ENCODE measurements at regions of chr2 and their contacts with region 1.

Region 1: DNA sequence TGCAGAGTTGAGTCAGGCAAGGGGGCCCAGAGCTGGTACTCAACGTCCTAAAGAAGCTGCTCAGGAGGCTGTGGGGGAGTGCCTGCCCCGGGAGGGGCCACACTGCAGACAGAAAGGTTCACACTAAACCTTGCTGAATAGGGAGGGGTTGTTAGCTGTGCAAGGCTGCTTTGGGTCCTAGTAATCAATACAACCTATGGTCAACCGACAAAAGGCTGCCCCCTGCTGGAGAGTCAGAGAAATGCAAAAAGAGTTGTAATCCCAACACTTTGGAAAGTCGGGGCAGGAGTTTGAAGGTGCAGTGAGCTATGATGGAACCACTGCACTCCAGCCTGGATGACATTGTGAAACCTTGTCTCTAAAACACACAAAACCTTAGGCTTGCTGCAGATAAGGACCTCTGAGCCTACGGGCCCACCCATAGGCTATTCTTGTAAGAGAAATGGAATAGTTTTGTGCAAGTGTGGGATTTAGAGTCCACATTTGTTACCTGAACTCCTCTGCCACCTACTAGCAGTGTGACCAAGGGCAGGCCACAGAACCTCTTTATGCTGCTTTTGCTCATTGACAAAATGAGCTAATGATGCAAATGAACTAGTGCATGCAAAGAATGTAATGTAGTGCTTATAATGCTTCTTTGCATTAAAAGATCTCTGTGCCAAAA is 81.5 kb downstream of the PRPF40A start:
- DNase-seq: peak; percentile 82
- ATAC-seq: peak; percentile 61

Region 2: DNA sequence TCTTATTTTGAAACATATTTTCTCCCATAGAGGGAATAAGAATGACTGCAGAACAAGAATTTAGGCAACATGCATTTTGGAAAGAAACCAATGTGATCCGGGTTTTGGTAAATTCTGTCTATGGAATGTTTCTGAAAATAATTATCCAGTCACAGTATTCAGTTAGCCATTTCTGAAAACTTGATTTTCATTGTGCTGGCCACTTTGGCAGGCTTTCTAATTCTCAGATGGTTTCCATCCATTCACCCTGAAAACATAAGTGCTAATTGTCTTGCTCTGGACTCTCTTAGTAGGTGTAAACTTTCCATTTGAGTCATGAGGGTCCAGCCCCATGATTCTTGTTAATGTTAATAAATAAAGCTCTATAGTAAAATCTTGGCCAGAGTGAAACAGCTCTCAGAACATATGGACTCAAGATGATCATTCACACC is 1550.6 kb before region 1 on chr2:
- intact Hi-C with region 1: no loop called
- DNase-seq: no peak
- ATAC-seq: no peak

Region 3: DNA sequence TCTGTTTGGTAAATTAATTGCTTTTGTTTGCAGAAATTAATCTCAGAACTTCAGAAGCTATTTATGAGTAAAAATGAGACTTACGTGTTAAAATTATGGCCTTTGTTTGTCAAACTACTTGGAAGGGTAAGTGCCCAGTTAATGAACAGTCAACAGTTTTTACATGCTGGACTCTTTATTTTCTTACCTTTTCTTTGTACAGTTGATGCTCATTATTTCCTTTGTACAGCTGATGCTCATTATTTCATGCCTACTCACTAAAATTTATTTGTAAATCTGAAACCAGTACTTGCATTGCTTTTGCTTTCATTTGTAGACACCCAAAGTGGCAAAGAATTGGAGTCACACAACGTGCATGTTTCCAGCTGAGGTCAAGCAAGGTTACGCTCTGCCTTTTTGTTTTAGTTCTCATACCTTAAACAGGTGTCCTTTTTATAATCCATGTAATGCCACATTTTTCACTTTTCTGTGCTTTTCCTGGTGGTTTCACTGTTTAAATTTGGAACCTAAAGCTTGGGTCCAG is 1212.8 kb before region 1 on chr2:
- intact Hi-C with region 1: no loop called
- DNase-seq: no peak
- ATAC-seq: no peak

Region 4: GRCh38 chr2:152189622-152190495 is 445.9 kb before region 1 on chr2:
- intact Hi-C with region 1: loop called (anchors 5 kb)
- DNase-seq: no peak
- ATAC-seq: peak; percentile 94

Region 5: DNA sequence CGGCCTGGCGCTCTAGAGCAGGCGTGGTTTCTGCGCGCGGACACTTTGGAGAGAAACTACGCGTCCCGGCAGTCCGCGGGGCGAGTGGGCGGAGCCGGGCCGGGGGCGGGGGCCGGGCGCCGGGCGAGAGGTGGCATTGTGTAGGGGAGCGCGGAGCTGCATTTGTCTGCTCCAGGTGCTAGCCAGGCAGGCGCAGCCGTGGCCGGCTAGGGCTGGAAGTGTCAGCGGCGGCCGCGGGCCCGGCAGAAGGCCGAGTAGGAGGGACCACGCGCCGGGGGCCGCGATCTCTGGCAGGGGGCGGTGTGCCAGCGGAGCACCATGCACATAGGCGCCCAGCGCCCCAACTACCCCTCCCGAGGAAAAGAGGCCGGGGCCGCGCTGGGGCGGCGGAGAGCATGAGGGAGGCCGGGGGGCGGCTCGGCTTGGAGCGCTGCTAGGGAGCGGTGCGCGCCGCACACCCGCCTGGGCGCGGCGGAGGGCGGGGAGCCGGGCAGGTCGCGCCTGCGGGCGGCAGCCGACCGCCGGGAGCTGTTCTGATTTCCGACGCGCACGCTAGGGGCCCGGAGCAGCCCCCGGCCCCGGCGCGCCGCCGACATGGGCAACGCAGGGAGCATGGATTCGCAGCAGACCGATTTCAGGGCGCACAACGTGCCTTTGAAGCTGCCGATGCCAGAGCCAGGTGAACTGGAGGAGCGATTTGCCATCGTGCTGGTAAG is 300.6 kb before region 1 on chr2 and contains the start of gene FMNL2:
- intact Hi-C with region 1: loop called (anchors 10 kb)
- DNase-seq: peak; percentile 91
- ATAC-seq: peak; percentile 90
- total RNA-seq, gene FMNL2: 129 TPM

Region 6: DNA sequence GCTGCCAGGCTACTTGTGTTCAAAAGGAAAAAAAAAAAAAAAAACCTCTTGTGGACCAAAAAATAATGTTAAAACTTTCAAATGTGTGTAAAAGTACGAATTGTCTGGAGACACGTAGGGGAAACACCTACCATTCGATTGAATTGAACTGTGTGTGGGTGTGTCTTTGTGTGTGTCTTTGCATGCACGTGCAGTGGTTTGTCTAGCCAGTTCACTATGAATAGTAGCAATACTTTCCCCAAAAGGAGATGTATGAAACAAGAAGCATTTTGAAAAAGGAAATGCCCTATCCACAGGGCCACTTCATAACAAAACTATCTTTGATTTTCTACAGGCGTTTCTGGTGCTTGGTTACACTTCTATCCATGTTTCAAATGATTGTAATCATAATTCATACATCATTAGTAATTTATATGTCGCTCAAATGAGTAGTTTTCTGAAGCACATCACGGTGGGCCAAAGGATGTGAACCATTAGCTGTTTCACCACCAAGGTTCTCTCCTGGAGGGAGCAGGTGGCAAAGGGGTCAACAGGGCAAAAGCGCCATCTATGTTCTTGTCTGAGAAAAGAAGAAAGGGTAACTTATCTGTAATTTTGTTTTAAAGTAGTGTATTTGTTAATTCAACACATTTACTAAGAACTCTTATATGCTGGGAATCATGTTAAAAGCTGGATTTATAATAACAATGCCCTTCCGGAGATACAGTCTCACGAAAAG is 656.1 kb after region 1 on chr2:
- intact Hi-C with region 1: loop called (anchors 5 kb)
- DNase-seq: no peak
- ATAC-seq: no peak

Measured in sciatic nerve (tissue), 2 donors.